Activated naive CD4-positive, alpha-beta T cell treated with anti-CD3 and anti-CD28 coated beads for 36 hours (primary cell): ENCODE measurements at regions of chr9 and their contacts with region 1.

Region 1: GRCh38 chr9:123637945-123638634 is 282.1 kb downstream of the CRB2 start:
- DNase-seq: peak; percentile 18
- H3K4me3 Mint-ChIP-seq: peak overlapping the region; percentile 64
- H3K27ac Mint-ChIP-seq: peak overlapping the region; percentile 51
- H3K4me1 Mint-ChIP-seq: peaks cover 40% of the 10 kb centered on the region
- H3K27me3 Mint-ChIP-seq: no peaks in the 10 kb centered on the region

Region 2: GRCh38 chr9:123571240-123571639 is 66.8 kb before region 1 on chr9:
- CTCF ChIA-PET with region 1: no interaction called
- intact Hi-C with region 1: loop called (anchors 5 kb)
- DNase-seq: no peak
- H3K4me3 Mint-ChIP-seq: no peak overlapping the region
- H3K27ac Mint-ChIP-seq: no peak overlapping the region
- H3K4me1 Mint-ChIP-seq: peaks cover 26% of the 10 kb centered on the region
- H3K27me3 Mint-ChIP-seq: no peaks in the 10 kb centered on the region

Region 3: GRCh38 chr9:123686131-123686828 is 48.2 kb after region 1 on chr9:
- CTCF ChIA-PET with region 1: no interaction called
- intact Hi-C with region 1: loop called (anchors 2 kb)
- DNase-seq: no peak
- H3K4me3 Mint-ChIP-seq: no peak overlapping the region
- H3K27ac Mint-ChIP-seq: no peak overlapping the region
- H3K4me1 Mint-ChIP-seq: peaks cover 59% of the 10 kb centered on the region
- H3K27me3 Mint-ChIP-seq: no peaks in the 10 kb centered on the region